Ovary (tissue), 10 donors: ENCODE measurements at regions of chr15 and their contacts with region 1.

Region 1: GRCh38 chr15:43352693-43353382 is 18.0 kb downstream of the ZSCAN29 start:
- DNase-seq: no peak
- H3K4me3 ChIP-seq: no peak overlapping the region
- H3K27ac ChIP-seq: no peak overlapping the region
- H3K4me1 ChIP-seq: no peaks in the 10 kb centered on the region
- H3K27me3 ChIP-seq: no peaks in the 10 kb centered on the region
- CTCF ChIP-seq: no peak
- EP300 ChIP-seq: no peak
- POLR2A ChIP-seq: no peak

Region 2: GRCh38 chr15:41979521-41980263 is 1373.1 kb before region 1 on chr15:
- intact Hi-C with region 1: loop called in 1 of 4 experiments (anchors 5 kb)
- DNase-seq: peak in 1 of 5 donors; percentile 16
- H3K4me3 ChIP-seq: no peak overlapping the region
- H3K27ac ChIP-seq: no peak overlapping the region
- H3K4me1 ChIP-seq: peaks cover 6% of the 10 kb centered on the region
- H3K27me3 ChIP-seq: no peaks in the 10 kb centered on the region
- CTCF ChIP-seq: no peak
- EP300 ChIP-seq: no peak
- POLR2A ChIP-seq: no peak

Region 3: GRCh38 chr15:43294091-43294925 is 58.5 kb before region 1 on chr15:
- intact Hi-C with region 1: no loop called
- DNase-seq: no peak
- H3K4me3 ChIP-seq: no peak overlapping the region
- H3K27ac ChIP-seq: no peak overlapping the region
- H3K4me1 ChIP-seq: no peaks in the 10 kb centered on the region
- H3K27me3 ChIP-seq: no peaks in the 10 kb centered on the region
- CTCF ChIP-seq: no peak
- EP300 ChIP-seq: no peak
- POLR2A ChIP-seq: no peak

Region 4: GRCh38 chr15:43446344-43446743 is 93.5 kb after region 1 on chr15:
- intact Hi-C with region 1: no loop called
- DNase-seq: no peak
- H3K4me3 ChIP-seq: no peak overlapping the region
- H3K27ac ChIP-seq: no peak overlapping the region
- H3K4me1 ChIP-seq: no peaks in the 10 kb centered on the region
- H3K27me3 ChIP-seq: no peaks in the 10 kb centered on the region
- CTCF ChIP-seq: no peak
- EP300 ChIP-seq: no peak
- POLR2A ChIP-seq: no peak

Region 5: GRCh38 chr15:43465105-43465504 is 112.3 kb after region 1 on chr15:
- intact Hi-C with region 1: no loop called
- DNase-seq: no peak
- H3K4me3 ChIP-seq: no peak overlapping the region
- H3K27ac ChIP-seq: no peak overlapping the region
- H3K4me1 ChIP-seq: no peaks in the 10 kb centered on the region
- H3K27me3 ChIP-seq: no peaks in the 10 kb centered on the region
- CTCF ChIP-seq: no peak
- EP300 ChIP-seq: no peak
- POLR2A ChIP-seq: no peak